A549 (cell line): ENCODE measurements at regions of chr5 and their contacts with region 1.

Region 1: DNA sequence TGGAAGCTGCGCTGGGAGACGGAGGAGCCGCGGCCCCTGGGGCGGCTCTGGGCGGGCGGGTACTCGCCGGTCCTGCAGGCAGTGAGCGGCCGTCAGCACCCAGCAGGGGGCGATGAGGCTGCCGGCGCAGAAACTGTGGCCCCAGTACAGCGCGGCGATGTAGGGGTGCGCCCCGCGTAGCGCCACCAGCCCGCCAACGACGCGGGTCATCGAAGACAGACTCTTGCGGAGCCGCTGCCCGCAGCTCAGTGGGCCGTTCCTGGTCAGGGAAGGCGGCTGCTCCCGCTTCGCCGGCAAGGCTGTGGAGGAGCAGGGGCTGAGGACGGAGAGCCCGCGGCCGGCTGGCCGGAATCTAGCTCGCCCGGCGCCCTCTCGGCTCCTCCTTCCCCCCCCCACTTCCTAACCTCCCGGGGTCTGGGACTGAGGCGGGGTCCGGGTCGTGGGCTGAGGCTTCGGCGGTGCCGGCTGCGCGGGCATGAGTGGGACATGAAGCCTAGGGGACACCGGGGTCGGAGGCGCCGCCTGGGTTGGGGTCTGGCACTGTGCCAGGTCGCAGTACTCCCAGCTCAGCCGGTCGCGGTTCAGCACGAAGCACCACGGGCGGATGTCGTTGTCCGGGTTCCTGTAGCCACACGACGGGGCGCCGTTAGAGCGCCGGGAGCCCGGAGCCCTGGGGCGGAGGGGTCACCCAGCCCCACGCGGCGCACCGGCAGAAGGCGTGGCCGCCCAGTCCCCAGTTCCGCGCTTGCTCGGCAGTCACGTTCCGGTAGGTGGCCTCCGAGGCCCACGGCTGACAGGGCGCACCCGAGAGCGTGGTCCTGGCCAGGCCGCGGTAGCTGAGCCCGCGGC is 3.6 kb upstream of the PFN3 start:
- DNase-seq: peak; percentile 87 to 95
- ATAC-seq: peak; percentile 76 to 91
- H3K4me3 ChIP-seq: peak overlapping the region; percentile 60
- H3K27ac ChIP-seq: peak overlapping the region; percentile 83 to 92
- H3K4me1 ChIP-seq: peaks cover 11% of the 10 kb centered on the region; the same call in 2 of the 3 replicates
- CTCF ChIP-seq: peak; percentile 71
- EP300 ChIP-seq: no peak
- POLR2A ChIP-seq: peak; percentile 72
- RAD21 ChIP-seq: peak; percentile 72 to 84

Region 2: GRCh38 chr5:176447541-176447981 is 956.5 kb before region 1 on chr5:
- CTCF ChIA-PET with region 1: no interaction called
- POLR2A ChIA-PET with region 1: no interaction called
- DNase-seq: no peak
- ATAC-seq: peak; percentile 68 to 73
- H3K4me3 ChIP-seq: peak overlapping the region; percentile 83
- H3K27ac ChIP-seq: peak overlapping the region; percentile 94 to 96
- H3K4me1 ChIP-seq: peaks cover 23% of the 10 kb centered on the region
- CTCF ChIP-seq: no peak
- EP300 ChIP-seq: no peak
- POLR2A ChIP-seq: peak; percentile 55
- RAD21 ChIP-seq: no peak; a peak in 1 of 5 replicates

Region 3: GRCh38 chr5:177154003-177154643 is 249.9 kb before region 1 on chr5:
- CTCF ChIA-PET with region 1: no interaction called
- POLR2A ChIA-PET with region 1: no interaction called
- DNase-seq: no peak
- ATAC-seq: 0 out of 6 replicates have a peak, but pooled peaks of 1 of the 2 experiments have one; percentile 34
- H3K4me3 ChIP-seq: no peak overlapping the region
- H3K27ac ChIP-seq: no peak overlapping the region
- H3K4me1 ChIP-seq: no peaks in the 10 kb centered on the region
- CTCF ChIP-seq: no peak
- EP300 ChIP-seq: no peak
- POLR2A ChIP-seq: no peak
- RAD21 ChIP-seq: no peak

Region 4: GRCh38 chr5:177317959-177318377 is 86.0 kb before region 1 on chr5:
- CTCF ChIA-PET with region 1: interaction called, 36 read pairs
- POLR2A ChIA-PET with region 1: no interaction called
- DNase-seq: peak; percentile 79 to 82
- ATAC-seq: peak; percentile 51 to 76; a peak in 5 of 6 replicates
- H3K4me3 ChIP-seq: no peak overlapping the region
- H3K27ac ChIP-seq: no peak overlapping the region
- H3K4me1 ChIP-seq: peaks cover 2% of the 10 kb centered on the region; the same call in 2 of the 3 replicates
- CTCF ChIP-seq: peak; percentile 96
- EP300 ChIP-seq: no peak
- POLR2A ChIP-seq: no peak
- RAD21 ChIP-seq: peak; percentile 88 to 92

Region 5: DNA sequence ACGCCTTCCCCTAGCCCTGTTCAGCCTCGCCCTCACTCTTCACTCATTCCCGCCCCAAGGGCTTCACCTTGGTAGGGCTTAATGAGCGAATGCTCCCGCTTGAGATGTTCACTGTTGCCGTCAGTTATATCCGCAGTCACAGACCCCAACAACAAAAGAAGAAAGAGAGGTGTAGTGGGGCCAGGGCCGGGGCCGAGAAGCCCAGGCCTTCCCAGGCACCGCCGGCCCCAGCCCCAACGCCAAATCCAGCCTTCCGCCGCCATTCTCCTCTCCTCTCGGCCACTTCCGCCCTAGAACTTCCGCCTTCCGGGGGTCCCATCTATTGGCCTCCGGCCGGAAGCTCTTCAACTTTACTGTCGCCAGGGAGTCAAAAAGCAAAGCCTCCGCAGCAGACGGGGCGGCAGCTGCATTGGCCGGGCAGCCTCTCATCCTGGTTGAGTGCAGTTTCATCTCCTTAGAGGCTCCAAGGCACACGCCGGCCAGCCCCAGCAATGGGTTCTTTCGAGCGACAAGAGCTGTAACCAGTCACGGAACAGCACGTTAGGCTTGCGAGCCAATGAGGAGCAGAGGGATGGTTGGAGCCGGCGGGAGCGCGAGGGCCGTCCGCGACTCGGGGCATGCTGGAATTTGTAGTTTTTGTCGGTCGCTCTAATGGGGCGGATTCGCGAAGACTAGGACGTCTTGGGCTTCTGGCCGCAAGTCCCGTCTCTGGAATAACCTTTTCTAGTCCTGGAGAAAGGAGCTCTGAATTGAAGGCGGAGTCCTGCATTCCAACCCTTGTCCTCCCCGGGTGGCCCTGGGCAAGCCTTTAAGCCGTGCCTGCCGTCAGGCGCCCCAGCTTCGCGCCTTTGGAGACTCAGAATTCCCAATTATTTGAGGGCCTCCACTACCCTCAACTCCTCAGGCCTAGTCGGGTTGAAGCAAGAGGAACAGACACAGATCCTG is 52.4 kb before region 1 on chr5 and contains the start of gene LMAN2:
- CTCF ChIA-PET with region 1: interaction called, 28 read pairs
- POLR2A ChIA-PET with region 1: interaction called, 5 read pairs
- DNase-seq: peak; percentile 94 to 97
- ATAC-seq: peak; percentile 98 to 99
- H3K4me3 ChIP-seq: peak within 1 kb of the TSS; percentile 78
- H3K27ac ChIP-seq: peak within 1 kb of the TSS; percentile 90 to 94
- H3K4me1 ChIP-seq: peaks cover 31% of the 10 kb centered on the region
- CTCF ChIP-seq: no peak
- EP300 ChIP-seq: no peak
- POLR2A ChIP-seq: peak; percentile 73
- RAD21 ChIP-seq: no peak
- polyA plus RNA-seq, gene LMAN2: 123 and 172 TPM in 2 replicates

Region 6: GRCh38 chr5:177390363-177391300 is 13.4 kb before region 1 on chr5:
- CTCF ChIA-PET with region 1: interaction called, 1,107 read pairs
- POLR2A ChIA-PET with region 1: interaction called, 10 read pairs
- DNase-seq: peak; percentile 87 to 98
- ATAC-seq: peak; percentile 81 to 94
- H3K4me3 ChIP-seq: no peak overlapping the region
- H3K27ac ChIP-seq: peak overlapping the region; percentile 44 to 72; a peak in 5 of 6 replicates
- H3K4me1 ChIP-seq: peaks cover 18% of the 10 kb centered on the region
- CTCF ChIP-seq: peak; percentile 97
- EP300 ChIP-seq: no peak
- POLR2A ChIP-seq: no peak
- RAD21 ChIP-seq: peak; percentile 89 to 92

Region 7: GRCh38 chr5:177446200-177447065 is 42.4 kb after region 1 on chr5 and contains the start of gene PRR7:
- CTCF ChIA-PET with region 1: interaction called, 871 read pairs
- POLR2A ChIA-PET with region 1: interaction called, 27 read pairs
- DNase-seq: peak; percentile 73 to 85
- ATAC-seq: peak; percentile 39 to 43
- H3K4me3 ChIP-seq: peak within 1 kb of the TSS; percentile 86
- H3K27ac ChIP-seq: peak within 1 kb of the TSS; percentile 95 to 98
- H3K4me1 ChIP-seq: peaks cover 21% of the 10 kb centered on the region
- CTCF ChIP-seq: no peak
- EP300 ChIP-seq: no peak
- POLR2A ChIP-seq: peak; percentile 18; the same call in 1 of the 2 replicates
- RAD21 ChIP-seq: no peak
- polyA plus RNA-seq, gene PRR7: 1.8 and 2.2 TPM in 2 replicates

Region 8: GRCh38 chr5:177462021-177462670 is 58.1 kb after region 1 on chr5:
- CTCF ChIA-PET with region 1: interaction called, 871 read pairs
- POLR2A ChIA-PET with region 1: no interaction called
- DNase-seq: no peak
- ATAC-seq: no peak
- H3K4me3 ChIP-seq: no peak overlapping the region
- H3K27ac ChIP-seq: no peak overlapping the region
- H3K4me1 ChIP-seq: no peaks in the 10 kb centered on the region; the same call in 2 of the 3 replicates
- CTCF ChIP-seq: no peak
- EP300 ChIP-seq: no peak
- POLR2A ChIP-seq: no peak
- RAD21 ChIP-seq: no peak

Region 9: DNA sequence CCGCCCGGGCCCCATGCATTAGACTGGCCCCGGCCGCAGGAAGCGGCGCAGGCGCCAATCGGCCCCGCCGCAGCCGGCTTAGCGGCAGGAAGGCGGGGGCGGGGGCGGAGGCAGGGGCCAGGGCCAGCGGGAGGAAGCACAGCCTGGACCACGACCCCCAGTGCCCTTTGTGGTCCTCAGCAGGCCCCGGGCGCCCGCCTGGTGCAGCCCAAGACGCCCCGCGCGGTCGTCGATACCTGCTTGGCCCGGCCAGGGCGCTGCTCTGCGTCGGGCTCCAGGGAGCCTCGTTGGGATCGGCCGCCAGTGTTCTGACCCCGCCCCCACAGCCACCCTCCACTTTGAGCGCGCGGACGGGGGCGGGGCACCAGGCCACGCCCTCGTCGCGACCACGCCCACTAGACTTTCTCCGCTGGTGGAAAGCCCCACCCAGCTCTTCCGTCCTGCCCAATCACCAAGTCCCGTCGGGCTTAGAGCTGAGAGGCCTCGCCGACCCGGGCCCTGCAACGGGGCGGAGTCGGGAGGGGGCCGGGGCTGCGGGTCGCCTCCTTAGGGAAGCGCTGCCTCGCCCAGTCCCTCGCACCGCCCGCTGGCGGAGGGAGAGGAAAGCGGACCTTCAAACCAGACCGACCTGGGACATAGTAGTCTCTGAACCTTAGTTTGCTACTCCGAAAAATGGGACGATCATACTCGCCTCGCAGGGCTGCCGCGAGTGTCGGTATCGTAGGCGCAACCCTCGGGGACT is 93.4 kb after region 1 on chr5 and contains the start of gene PDLIM7:
- CTCF ChIA-PET with region 1: interaction called, 100 read pairs
- POLR2A ChIA-PET with region 1: interaction called, 5 read pairs
- DNase-seq: peak; percentile 97
- ATAC-seq: peak; percentile 40 to 80
- H3K4me3 ChIP-seq: peak within 1 kb of the TSS; percentile 63
- H3K27ac ChIP-seq: peak within 1 kb of the TSS; percentile 82 to 95
- H3K4me1 ChIP-seq: peaks cover 51% of the 10 kb centered on the region
- CTCF ChIP-seq: no peak
- EP300 ChIP-seq: no peak
- POLR2A ChIP-seq: peak; percentile 91
- RAD21 ChIP-seq: no peak
- polyA plus RNA-seq, gene PDLIM7: 26.1 and 30.7 TPM in 2 replicates